Prostate gland (tissue), 2 donors: ENCODE measurements at regions of chr4 and their contacts with region 1.

Region 1: GRCh38 chr4:15956179-15956850 is 6.7 kb downstream of the FGFBP2 start:
- DNase-seq: peak; percentile 70
- H3K4me3 ChIP-seq: no peak overlapping the region
- H3K27ac ChIP-seq: no peak overlapping the region
- H3K4me1 ChIP-seq: no peaks in the 10 kb centered on the region
- H3K27me3 ChIP-seq: no peaks in the 10 kb centered on the region
- CTCF ChIP-seq: peak; percentile 77 to 93 (median 90)
- POLR2A ChIP-seq: no peak

Region 2: GRCh38 chr4:15336410-15337172 is 619.7 kb before region 1 on chr4:
- intact Hi-C with region 1: no loop called
- DNase-seq: no peak
- H3K4me3 ChIP-seq: no peak overlapping the region
- H3K27ac ChIP-seq: no peak overlapping the region
- H3K4me1 ChIP-seq: no peaks in the 10 kb centered on the region
- H3K27me3 ChIP-seq: no peaks in the 10 kb centered on the region
- CTCF ChIP-seq: no peak
- POLR2A ChIP-seq: no peak

Region 3: DNA sequence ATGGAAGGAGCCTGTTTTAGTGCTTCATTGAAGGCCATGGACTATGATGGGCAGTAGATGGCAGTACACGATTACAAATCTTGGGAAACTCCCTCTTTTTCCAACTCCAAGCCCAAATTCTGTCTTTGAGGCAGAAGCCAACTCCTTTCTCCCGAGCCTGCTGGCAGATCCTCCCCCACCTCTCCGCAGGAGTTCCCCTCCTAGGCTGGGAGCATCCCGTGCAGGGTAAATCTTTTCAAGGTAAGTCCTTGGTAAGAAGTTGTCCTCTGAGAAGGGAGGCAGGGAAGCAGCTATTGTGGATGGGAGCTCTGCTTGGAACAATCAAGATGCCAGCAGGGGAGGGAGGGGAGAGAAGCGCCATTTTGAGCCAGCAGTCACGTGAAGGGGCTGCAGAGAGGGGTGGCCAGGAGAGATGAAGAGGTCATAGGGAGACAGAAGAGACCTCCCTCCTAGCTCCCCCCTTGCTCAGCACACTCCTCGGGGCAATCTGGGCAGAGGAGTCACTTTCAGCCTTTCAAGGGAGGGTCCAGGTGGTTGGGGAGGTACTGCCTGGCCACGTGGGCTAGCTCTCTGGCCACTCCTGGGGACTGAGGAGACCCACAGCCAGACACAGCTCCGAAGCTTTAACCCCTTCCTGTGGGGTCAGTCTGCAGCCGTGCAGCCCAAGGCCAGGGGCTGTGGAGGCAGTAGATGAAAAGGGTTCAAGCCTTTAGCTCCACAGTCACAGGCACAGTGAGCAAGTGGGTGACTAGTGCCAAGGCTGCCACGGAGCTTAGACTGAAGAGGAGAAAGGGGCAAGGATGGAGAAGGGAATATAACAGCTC is 477.0 kb before region 1 on chr4:
- intact Hi-C with region 1: loop called (anchors 5 kb)
- DNase-seq: peak; percentile 39
- H3K4me3 ChIP-seq: peak overlapping the region; percentile 26 to 37
- H3K27ac ChIP-seq: peak overlapping the region; percentile 65 to 69
- H3K4me1 ChIP-seq: no peaks in the 10 kb centered on the region
- H3K27me3 ChIP-seq: no peaks in the 10 kb centered on the region
- CTCF ChIP-seq: peak in 3 of 4 experiments; percentile 55 to 75 (median 56)
- POLR2A ChIP-seq: no peak

Region 4: GRCh38 chr4:15562114-15562513 is 394.2 kb before region 1 on chr4:
- intact Hi-C with region 1: loop called (anchors 5 kb)
- DNase-seq: no peak
- H3K4me3 ChIP-seq: no peak overlapping the region
- H3K27ac ChIP-seq: no peak overlapping the region
- H3K4me1 ChIP-seq: no peaks in the 10 kb centered on the region
- H3K27me3 ChIP-seq: no peaks in the 10 kb centered on the region
- CTCF ChIP-seq: no peak
- POLR2A ChIP-seq: no peak

Region 5: DNA sequence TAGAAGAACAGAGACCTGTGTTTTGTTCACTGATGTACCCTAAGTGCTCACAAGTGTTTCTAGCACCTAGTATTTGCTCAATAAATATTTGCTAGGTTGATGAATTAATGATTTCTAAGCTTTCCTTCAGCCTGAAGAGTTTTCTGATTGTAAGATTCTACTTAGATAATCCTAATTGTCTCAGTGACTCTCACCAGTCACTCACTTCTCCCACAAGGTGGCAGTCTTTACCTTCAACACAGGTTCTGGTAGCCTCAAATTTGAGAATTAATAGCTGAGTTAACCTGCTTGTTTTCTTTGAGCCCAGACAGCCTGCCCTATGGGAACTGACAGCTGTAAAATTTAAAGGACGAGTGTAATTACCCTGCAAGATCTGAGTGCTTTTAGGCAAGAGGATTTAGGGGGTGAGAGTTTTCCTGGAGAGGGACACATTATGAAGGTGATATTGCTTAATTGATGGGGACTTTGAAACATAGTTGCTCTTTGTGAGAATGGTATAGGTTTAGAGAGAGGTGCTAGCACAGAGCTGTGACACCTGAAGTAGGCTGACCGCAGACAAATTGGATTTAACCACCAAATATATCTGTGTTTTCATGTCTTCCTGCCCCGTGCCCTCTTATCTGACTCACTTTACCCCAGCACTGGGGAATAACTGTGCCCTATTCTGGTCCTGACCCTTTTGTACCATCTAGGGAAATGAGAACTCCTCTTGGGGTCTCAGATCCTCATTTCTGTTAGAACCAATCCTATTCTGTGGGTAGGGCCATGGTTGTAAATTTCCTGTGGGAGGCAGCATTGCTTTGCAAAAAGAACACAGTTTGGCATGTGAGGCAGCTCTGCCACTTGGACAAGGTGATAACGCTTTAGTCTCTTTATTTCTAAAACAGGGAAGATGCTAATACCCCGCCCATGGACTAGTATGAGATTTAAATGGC is 150.5 kb before region 1 on chr4:
- intact Hi-C with region 1: loop called (anchors 5 kb)
- DNase-seq: peak; percentile 62
- H3K4me3 ChIP-seq: no peak overlapping the region
- H3K27ac ChIP-seq: no peak overlapping the region
- H3K4me1 ChIP-seq: no peaks in the 10 kb centered on the region
- H3K27me3 ChIP-seq: no peaks in the 10 kb centered on the region
- CTCF ChIP-seq: peak in 3 of 4 experiments; percentile 74 to 83 (median 80)
- POLR2A ChIP-seq: no peak